CD4-positive, alpha-beta memory T cell (primary cell): ENCODE measurements at regions of chr2 and their contacts with region 1.

Region 1: GRCh38 chr2:196213252-196213980 is 42.0 kb upstream of the STK17B start:
- DNase-seq: peak in 2 of 5 donors; percentile 23 to 26
- H3K4me3 ChIP-seq: no peak overlapping the region
- H3K4me3 Mint-ChIP-seq: peak overlapping the region in 1 of 8 donors; percentile 44
- H3K27ac ChIP-seq: no peak overlapping the region
- H3K27ac Mint-ChIP-seq: peak overlapping the region; percentile 78 to 100 (median 99)
- H3K4me1 ChIP-seq: peaks cover 61% of the 10 kb centered on the region
- H3K4me1 Mint-ChIP-seq: peaks cover 45 to 80% (median 65%) of the 10 kb centered on the region in 4 donors
- H3K27me3 ChIP-seq: no peaks in the 10 kb centered on the region
- H3K27me3 Mint-ChIP-seq: no peaks in the 10 kb centered on the region

Region 2: GRCh38 chr2:195574312-195574711 is 639.1 kb before region 1 on chr2:
- CTCF ChIA-PET with region 1: no interaction called
- POLR2A ChIA-PET with region 1: no interaction called
- intact Hi-C with region 1: no loop called
- DNase-seq: no peak
- H3K4me3 ChIP-seq: no peak overlapping the region
- H3K4me3 Mint-ChIP-seq: no peak overlapping the region
- H3K27ac ChIP-seq: no peak overlapping the region
- H3K27ac Mint-ChIP-seq: peak overlapping the region in 2 of 7 donors; percentile 22 to 70
- H3K4me1 ChIP-seq: peaks cover 44% of the 10 kb centered on the region
- H3K4me1 Mint-ChIP-seq: peaks cover 34 to 63% (median 49%) of the 10 kb centered on the region in 4 donors
- H3K27me3 ChIP-seq: no peaks in the 10 kb centered on the region
- H3K27me3 Mint-ChIP-seq: no peaks in the 10 kb centered on the region

Region 3: DNA sequence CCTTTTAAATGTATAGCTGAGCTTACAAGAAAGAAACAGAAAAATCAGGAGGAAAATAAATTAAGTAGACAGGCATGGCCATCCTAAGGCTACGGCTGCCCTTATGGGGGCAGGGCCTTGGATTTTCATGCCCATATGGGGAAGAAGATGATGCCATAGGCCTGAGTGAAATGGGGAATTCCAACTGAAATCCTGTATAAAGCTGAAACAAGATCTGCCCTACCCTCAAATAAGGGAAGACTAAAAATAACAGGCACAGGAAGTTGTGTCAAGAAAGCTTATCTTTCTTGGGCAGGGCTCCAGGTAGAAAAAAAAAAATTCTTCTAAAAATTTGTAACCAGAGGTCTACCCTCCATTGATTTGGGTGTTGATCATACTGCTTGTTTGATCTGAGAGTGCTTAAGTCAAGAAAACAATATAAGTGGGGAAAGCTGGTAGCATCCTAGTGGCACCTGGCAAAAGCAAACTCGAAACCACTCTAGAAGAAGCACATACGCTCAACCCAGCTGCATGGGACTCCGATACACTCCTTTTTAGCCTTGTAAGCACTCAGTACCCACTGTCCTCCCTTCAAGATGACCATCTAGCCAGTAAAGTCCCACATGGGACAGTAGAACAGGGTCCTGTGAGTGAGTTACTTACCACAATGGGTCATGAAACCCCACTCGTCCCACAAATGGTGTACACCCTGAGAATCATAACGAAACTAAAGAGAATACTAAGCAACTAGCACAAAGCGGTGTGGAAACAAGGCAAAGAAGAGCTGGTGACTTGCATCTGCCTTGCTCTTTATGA is 167.1 kb before region 1 on chr2:
- CTCF ChIA-PET with region 1: no interaction called
- POLR2A ChIA-PET with region 1: no interaction called
- intact Hi-C with region 1: no loop called
- DNase-seq: no peak
- H3K4me3 ChIP-seq: no peak overlapping the region
- H3K4me3 Mint-ChIP-seq: peak overlapping the region in 1 of 8 donors; percentile 10
- H3K27ac ChIP-seq: no peak overlapping the region
- H3K27ac Mint-ChIP-seq: no peak overlapping the region
- H3K4me1 ChIP-seq: no peaks in the 10 kb centered on the region
- H3K4me1 Mint-ChIP-seq: no peaks in the 10 kb centered on the region
- H3K27me3 ChIP-seq: no peaks in the 10 kb centered on the region
- H3K27me3 Mint-ChIP-seq: peaks cover 17 to 18% of the 10 kb centered on the region in 2 donors

Region 4: GRCh38 chr2:196195302-196195701 is 18.1 kb before region 1 on chr2:
- CTCF ChIA-PET with region 1: interaction called, 7 read pairs
- POLR2A ChIA-PET with region 1: interaction called, 45 read pairs
- intact Hi-C with region 1: loop called (anchors 1 kb)
- DNase-seq: no peak
- H3K4me3 ChIP-seq: peak overlapping the region in 1 of 2 donors; percentile 34
- H3K4me3 Mint-ChIP-seq: peak overlapping the region; percentile 29 to 83 (median 74)
- H3K27ac ChIP-seq: no peak overlapping the region
- H3K27ac Mint-ChIP-seq: peak overlapping the region; percentile 23 to 91 (median 61)
- H3K4me1 ChIP-seq: peaks cover 61% of the 10 kb centered on the region
- H3K4me1 Mint-ChIP-seq: peaks cover 32 to 76% (median 53%) of the 10 kb centered on the region in 4 donors
- H3K27me3 ChIP-seq: no peaks in the 10 kb centered on the region
- H3K27me3 Mint-ChIP-seq: no peaks in the 10 kb centered on the region

Region 5: DNA sequence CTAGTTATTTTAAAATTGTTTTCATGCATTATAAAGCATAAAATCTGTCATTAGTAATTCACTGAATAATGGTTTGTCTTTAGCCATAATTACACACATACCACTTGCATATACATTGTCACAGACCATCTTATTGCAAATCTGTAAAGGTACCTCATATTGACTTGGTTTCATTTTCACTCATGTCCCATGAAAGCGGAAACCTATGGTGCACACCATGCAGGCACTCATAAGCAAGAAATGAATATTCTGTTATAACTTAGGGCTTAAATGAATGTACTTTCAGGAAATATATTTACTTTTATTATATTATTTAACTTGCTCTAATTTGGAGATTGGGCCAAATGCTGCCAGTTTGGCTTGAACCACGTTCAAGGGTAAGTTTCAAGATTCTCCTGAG is 12.9 kb before region 1 on chr2:
- CTCF ChIA-PET with region 1: interaction called, 7 read pairs
- POLR2A ChIA-PET with region 1: interaction called, 45 read pairs
- intact Hi-C with region 1: loop called (anchors 1 kb)
- DNase-seq: peak; percentile 45 to 55 (median 50)
- H3K4me3 ChIP-seq: peak overlapping the region; percentile 43 to 57
- H3K4me3 Mint-ChIP-seq: peak overlapping the region; percentile 74 to 92 (median 80)
- H3K27ac ChIP-seq: peak overlapping the region; percentile 70
- H3K27ac Mint-ChIP-seq: peak overlapping the region; percentile 72 to 98 (median 95)
- H3K4me1 ChIP-seq: peaks cover 63% of the 10 kb centered on the region
- H3K4me1 Mint-ChIP-seq: peaks cover 37 to 58% (median 44%) of the 10 kb centered on the region in 4 donors
- H3K27me3 ChIP-seq: no peaks in the 10 kb centered on the region
- H3K27me3 Mint-ChIP-seq: no peaks in the 10 kb centered on the region

Region 6: GRCh38 chr2:196337208-196337953 is 124.0 kb after region 1 on chr2:
- CTCF ChIA-PET with region 1: no interaction called
- POLR2A ChIA-PET with region 1: no interaction called
- intact Hi-C with region 1: loop called (anchors 5 kb)
- DNase-seq: peak in 4 of 5 donors; percentile 23 to 32 (median 24)
- H3K4me3 ChIP-seq: no peak overlapping the region
- H3K4me3 Mint-ChIP-seq: no peak overlapping the region
- H3K27ac ChIP-seq: no peak overlapping the region
- H3K27ac Mint-ChIP-seq: no peak overlapping the region
- H3K4me1 ChIP-seq: peaks cover 4% of the 10 kb centered on the region
- H3K4me1 Mint-ChIP-seq: peaks cover 0 to 7% (median 1%) of the 10 kb centered on the region in 4 donors
- H3K27me3 ChIP-seq: no peaks in the 10 kb centered on the region
- H3K27me3 Mint-ChIP-seq: peaks cover 0 to 1% of the 10 kb centered on the region in 2 donors

Region 7: GRCh38 chr2:196399722-196400691 is 186.6 kb after region 1 on chr2:
- CTCF ChIA-PET with region 1: no interaction called
- POLR2A ChIA-PET with region 1: no interaction called
- intact Hi-C with region 1: no loop called
- DNase-seq: no peak
- H3K4me3 ChIP-seq: no peak overlapping the region
- H3K4me3 Mint-ChIP-seq: no peak overlapping the region
- H3K27ac ChIP-seq: no peak overlapping the region
- H3K27ac Mint-ChIP-seq: no peak overlapping the region
- H3K4me1 ChIP-seq: no peaks in the 10 kb centered on the region
- H3K4me1 Mint-ChIP-seq: no peaks in the 10 kb centered on the region
- H3K27me3 ChIP-seq: no peaks in the 10 kb centered on the region
- H3K27me3 Mint-ChIP-seq: peaks cover 0 to 2% of the 10 kb centered on the region in 2 donors

Region 8: DNA sequence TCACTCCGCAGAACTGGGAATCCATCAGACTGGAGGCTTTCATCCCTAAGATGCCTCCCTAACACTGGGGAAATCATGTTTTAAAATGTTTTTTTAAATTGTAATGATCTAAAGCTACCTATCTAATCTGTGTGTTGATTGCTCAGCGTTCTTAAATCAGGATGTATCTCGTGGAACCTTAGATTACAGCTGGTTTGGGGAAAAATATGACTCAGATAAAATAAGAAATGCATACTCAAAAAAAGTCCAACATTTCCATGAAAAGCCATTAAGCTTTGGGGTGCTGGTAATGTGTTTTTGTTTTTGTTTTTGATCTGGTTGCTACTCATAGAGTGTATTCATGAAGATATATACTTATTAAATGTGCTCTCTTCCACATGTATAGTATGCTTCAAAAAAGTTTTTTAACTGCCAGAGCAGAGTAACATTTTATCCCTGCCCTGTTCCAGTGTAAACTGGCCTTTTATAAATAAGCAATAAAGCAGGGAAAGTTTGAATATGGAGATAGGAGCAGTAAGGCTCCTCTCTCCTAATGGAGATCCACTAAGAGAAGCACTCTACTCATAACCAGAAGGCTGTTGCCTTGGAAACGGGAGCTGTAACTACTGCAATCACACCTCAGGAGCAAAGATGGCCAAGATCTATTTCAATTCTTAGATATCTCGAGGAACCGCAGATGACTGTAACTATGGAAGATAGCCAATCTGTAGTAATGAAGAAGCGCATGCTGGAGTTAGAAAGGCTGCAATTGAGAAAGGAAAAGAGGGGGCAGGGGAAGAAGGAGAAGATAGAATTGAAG is 1055.6 kb after region 1 on chr2:
- CTCF ChIA-PET with region 1: no interaction called
- POLR2A ChIA-PET with region 1: no interaction called
- intact Hi-C with region 1: no loop called
- DNase-seq: peak in 3 of 5 donors; percentile 50 to 81 (median 61)
- H3K4me3 ChIP-seq: no peak overlapping the region
- H3K4me3 Mint-ChIP-seq: peak overlapping the region in 7 of 8 donors; percentile 11 to 64 (median 59)
- H3K27ac ChIP-seq: peak overlapping the region; percentile 35
- H3K27ac Mint-ChIP-seq: peak overlapping the region; percentile 77 to 98 (median 87)
- H3K4me1 ChIP-seq: peaks cover 98% of the 10 kb centered on the region
- H3K4me1 Mint-ChIP-seq: peaks cover 71 to 99% (median 89%) of the 10 kb centered on the region in 4 donors
- H3K27me3 ChIP-seq: no peaks in the 10 kb centered on the region
- H3K27me3 Mint-ChIP-seq: no peaks in the 10 kb centered on the region